ENCODE measurements at regions of chr1 and their contacts with region 1.

Region 1: DNA sequence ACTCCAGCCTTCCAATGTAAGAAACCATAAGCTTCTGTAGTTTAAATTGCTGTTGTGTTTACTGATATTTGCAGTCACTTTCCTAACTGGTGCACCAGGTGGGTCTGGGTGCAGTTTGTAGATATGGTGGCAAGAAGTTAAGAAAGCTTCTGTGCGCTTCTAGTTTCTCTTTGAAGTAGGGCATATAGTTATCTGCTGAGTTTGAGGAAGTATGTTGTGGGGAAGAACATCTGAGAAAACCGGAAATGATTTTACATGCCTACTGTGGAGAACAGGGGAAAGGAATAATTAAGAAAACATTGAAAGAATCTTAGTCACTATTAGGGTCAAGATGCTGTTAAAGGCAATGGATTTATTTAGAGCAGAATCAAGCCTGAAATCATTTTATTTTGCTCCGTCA is 14.9 kb upstream of the SLC44A5 start:
- DNase-seq: no peak
- ATAC-seq: no peak
- H3K4me3 ChIP-seq: no peak overlapping the region
- H3K27ac ChIP-seq: no peak overlapping the region
- H3K4me1 ChIP-seq: no peaks in the 10 kb centered on the region
- H3K27me3 ChIP-seq: peaks cover 0 to 3% (median 0%) of the 10 kb centered on the region in 4 donors
- CTCF ChIP-seq: no peak

Region 2: DNA sequence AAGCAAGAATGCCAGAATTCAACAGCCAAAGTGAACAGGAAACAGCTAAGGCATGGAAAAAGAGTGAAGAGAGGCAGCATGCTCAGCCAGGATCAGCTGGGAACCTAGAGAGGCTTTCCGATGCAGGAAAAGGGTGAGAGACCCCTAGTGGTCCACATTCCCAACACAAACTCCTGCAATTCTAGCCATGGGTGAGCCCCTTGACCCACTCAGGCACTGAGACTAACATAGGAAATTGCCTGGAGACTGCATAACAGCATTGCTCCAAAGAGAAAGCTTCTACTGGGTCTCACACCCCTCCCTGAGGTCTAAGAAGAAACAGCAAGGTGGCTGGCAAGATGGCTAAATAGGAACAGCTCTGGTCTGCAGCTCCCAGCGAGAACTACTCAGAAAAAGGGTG is 368.4 kb before region 1 on chr1:
- intact Hi-C with region 1: loop called in 2 of 3 experiments (anchors 10 kb)
- DNase-seq: no peak
- ATAC-seq: no peak
- H3K4me3 ChIP-seq: no peak overlapping the region
- H3K27ac ChIP-seq: no peak overlapping the region
- H3K4me1 ChIP-seq: no peaks in the 10 kb centered on the region
- H3K27me3 ChIP-seq: no peaks in the 10 kb centered on the region
- CTCF ChIP-seq: no peak

Region 3: DNA sequence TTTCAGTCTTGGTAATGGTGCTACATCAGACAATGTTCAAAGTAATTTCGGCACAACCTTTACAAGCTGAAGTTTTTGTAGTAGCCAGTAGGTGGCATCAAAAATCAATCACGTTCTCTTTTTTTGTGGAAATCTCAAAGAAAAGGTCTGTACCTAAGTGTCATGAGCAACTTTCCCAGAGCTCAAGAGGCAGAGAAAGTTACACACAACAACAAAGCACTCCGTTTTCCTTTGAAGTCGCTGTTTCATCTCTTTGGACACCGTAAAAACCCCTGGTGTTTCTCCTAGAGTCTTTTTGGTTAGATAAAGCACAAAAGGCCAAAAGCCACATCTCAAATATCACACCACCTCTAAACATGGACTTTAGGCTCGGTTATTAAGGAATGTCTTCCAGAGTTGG is 360.0 kb before region 1 on chr1:
- intact Hi-C with region 1: loop called in 1 of 3 experiments (anchors 10 kb)
- DNase-seq: no peak
- ATAC-seq: peak; percentile 59 to 91 (median 84)
- H3K4me3 ChIP-seq: no peak overlapping the region
- H3K27ac ChIP-seq: peak overlapping the region in 1 of 4 donors; percentile 31
- H3K4me1 ChIP-seq: peaks cover 10 to 15% (median 13%) of the 10 kb centered on the region in 3 donors
- H3K27me3 ChIP-seq: no peaks in the 10 kb centered on the region
- CTCF ChIP-seq: peak in 3 of 4 donors; percentile 34 to 53 (median 39)

Measured in pancreas (tissue), 10 donors.